PC-9 (cell line): ENCODE measurements at regions of chr10 and their contacts with region 1.

Region 1: DNA sequence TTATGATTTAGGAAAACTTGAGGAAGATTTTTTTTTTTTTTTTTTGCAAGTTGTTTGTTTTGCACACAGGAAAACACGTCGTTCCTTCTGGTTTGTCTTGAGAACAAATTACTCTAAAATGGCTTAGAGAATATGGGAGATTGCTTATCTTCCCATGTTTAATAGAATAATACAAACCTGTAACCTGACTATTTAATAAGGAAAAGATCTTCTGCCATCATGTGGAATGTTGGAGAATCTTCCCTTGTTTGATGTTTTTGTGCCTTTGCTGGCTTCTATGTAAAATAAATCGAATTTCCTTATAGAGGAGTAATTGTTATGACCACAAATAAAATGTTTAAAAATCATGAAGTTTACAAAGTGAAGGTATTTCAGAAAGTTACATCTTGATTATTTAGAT is 818.8 kb downstream of the GATA3 start:
- DNase-seq: peak in 1 of 2 experiments; percentile 51
- H3K4me3 ChIP-seq: no peak overlapping the region
- H3K27ac ChIP-seq: peak overlapping the region; percentile 48
- H3K4me1 ChIP-seq: peaks cover 20% of the 10 kb centered on the region
- H3K27me3 ChIP-seq: no peaks in the 10 kb centered on the region
- CTCF ChIP-seq: peak; percentile 53; the same call in 1 of the 2 replicates

Region 2: DNA sequence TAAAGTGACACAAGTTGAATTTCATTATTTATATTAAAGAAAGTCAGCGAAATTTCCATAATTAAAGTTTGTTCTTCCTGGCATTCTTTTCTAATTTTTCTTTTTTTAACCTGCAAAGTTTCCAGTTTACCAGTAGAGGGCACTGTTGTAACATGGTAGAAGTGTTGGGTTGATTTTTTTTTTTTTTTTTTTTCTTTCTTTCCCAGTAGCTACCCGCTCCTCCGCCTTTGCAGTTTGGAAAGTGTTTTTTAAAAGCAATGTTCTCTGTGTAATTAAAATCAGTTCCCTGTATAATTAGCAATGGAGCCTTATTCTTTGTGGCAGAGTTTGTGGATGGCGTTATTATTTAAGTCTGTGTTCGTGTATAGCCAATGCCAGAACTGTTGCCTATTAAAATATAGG is 1001.3 kb before region 1 on chr10:
- CTCF ChIA-PET with region 1: interaction called, 3 read pairs
- POLR2A ChIA-PET with region 1: no interaction called
- intact Hi-C with region 1: loop called (anchors 1 kb)
- DNase-seq: peak in 1 of 2 experiments; percentile 5
- H3K4me3 ChIP-seq: peak overlapping the region; percentile 54; the same call in 1 of the 2 replicates
- H3K27ac ChIP-seq: no peak overlapping the region
- H3K4me1 ChIP-seq: peaks cover 8% of the 10 kb centered on the region
- H3K27me3 ChIP-seq: no peaks in the 10 kb centered on the region
- CTCF ChIP-seq: peak; percentile 74

Region 3: GRCh38 chr10:8193546-8193945 is 679.8 kb before region 1 on chr10:
- CTCF ChIA-PET with region 1: no interaction called
- POLR2A ChIA-PET with region 1: no interaction called
- intact Hi-C with region 1: loop called (anchors 1 kb)
- DNase-seq: peak; percentile 37 to 93
- H3K4me3 ChIP-seq: peak overlapping the region; percentile 52; the same call in 1 of the 2 replicates
- H3K27ac ChIP-seq: peak overlapping the region; percentile 99
- H3K4me1 ChIP-seq: peaks cover 32% of the 10 kb centered on the region
- H3K27me3 ChIP-seq: no peaks in the 10 kb centered on the region
- CTCF ChIP-seq: no peak

Region 4: GRCh38 chr10:8726071-8726470 is 147.2 kb before region 1 on chr10:
- CTCF ChIA-PET with region 1: no interaction called
- POLR2A ChIA-PET with region 1: no interaction called
- intact Hi-C with region 1: loop called (anchors 2 kb)
- DNase-seq: peak; percentile 31 to 92
- H3K4me3 ChIP-seq: no peak overlapping the region
- H3K27ac ChIP-seq: peak overlapping the region; percentile 99
- H3K4me1 ChIP-seq: peaks cover 46% of the 10 kb centered on the region
- H3K27me3 ChIP-seq: no peaks in the 10 kb centered on the region
- CTCF ChIP-seq: no peak

Region 5: GRCh38 chr10:8898745-8899325 is 25.5 kb after region 1 on chr10:
- CTCF ChIA-PET with region 1: no interaction called
- POLR2A ChIA-PET with region 1: no interaction called
- intact Hi-C with region 1: no loop called
- DNase-seq: no peak
- H3K4me3 ChIP-seq: no peak overlapping the region
- H3K27ac ChIP-seq: no peak overlapping the region
- H3K4me1 ChIP-seq: no peaks in the 10 kb centered on the region
- H3K27me3 ChIP-seq: no peaks in the 10 kb centered on the region
- CTCF ChIP-seq: no peak

Region 6: DNA sequence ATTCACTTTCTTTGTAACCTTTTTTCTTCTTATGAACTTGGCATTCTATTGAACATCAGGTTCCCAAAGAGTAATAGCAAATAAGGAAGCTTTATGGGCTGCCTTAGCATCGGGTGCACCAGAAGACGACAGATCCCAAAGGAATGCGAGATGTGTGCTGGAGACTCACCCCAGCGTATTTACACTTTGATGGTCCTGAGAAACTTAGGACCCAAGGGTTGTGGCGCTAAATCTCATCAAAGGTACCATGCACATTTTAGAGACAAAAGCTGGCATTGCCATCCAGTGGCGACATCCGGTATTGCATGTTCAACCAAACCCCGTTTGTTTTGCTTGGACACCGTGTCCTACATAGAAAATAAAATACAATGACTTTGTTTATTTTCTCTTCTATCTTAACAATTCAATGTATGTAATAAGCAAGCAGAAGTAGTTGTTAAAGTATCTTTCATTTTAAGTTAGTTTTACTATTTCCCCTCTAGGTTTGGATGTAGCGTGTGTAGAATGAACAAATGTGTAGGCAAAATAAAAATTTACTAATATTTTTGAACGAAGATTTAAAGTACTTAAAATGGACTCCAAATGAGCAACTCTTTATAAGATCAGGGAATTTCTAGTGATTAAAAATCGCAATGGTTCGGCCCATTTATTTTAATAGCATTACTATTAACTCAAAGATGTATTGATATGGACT is 335.9 kb after region 1 on chr10:
- CTCF ChIA-PET with region 1: no interaction called
- POLR2A ChIA-PET with region 1: no interaction called
- intact Hi-C with region 1: loop called (anchors 1 kb)
- DNase-seq: peak; percentile 61 to 69
- H3K4me3 ChIP-seq: no peak overlapping the region
- H3K27ac ChIP-seq: no peak overlapping the region
- H3K4me1 ChIP-seq: no peaks in the 10 kb centered on the region
- H3K27me3 ChIP-seq: no peaks in the 10 kb centered on the region
- CTCF ChIP-seq: peak; percentile 87

Region 7: GRCh38 chr10:9547936-9548904 is 674.9 kb after region 1 on chr10:
- CTCF ChIA-PET with region 1: no interaction called
- POLR2A ChIA-PET with region 1: no interaction called
- intact Hi-C with region 1: no loop called
- DNase-seq: no peak
- H3K4me3 ChIP-seq: no peak overlapping the region
- H3K27ac ChIP-seq: no peak overlapping the region
- H3K4me1 ChIP-seq: no peaks in the 10 kb centered on the region
- H3K27me3 ChIP-seq: no peaks in the 10 kb centered on the region
- CTCF ChIP-seq: no peak